Motor neuron (in vitro differentiated cells): ENCODE measurements at regions of chr11 and their contacts with region 1.

Region 1: GRCh38 chr11:33959855-33960400 is 68.1 kb upstream of the LMO2 start:
- ATAC-seq: no peak
- H3K4me3 ChIP-seq: no peak overlapping the region
- H3K27ac ChIP-seq: no peak overlapping the region
- H3K4me1 ChIP-seq: no peaks in the 10 kb centered on the region

Region 2: DNA sequence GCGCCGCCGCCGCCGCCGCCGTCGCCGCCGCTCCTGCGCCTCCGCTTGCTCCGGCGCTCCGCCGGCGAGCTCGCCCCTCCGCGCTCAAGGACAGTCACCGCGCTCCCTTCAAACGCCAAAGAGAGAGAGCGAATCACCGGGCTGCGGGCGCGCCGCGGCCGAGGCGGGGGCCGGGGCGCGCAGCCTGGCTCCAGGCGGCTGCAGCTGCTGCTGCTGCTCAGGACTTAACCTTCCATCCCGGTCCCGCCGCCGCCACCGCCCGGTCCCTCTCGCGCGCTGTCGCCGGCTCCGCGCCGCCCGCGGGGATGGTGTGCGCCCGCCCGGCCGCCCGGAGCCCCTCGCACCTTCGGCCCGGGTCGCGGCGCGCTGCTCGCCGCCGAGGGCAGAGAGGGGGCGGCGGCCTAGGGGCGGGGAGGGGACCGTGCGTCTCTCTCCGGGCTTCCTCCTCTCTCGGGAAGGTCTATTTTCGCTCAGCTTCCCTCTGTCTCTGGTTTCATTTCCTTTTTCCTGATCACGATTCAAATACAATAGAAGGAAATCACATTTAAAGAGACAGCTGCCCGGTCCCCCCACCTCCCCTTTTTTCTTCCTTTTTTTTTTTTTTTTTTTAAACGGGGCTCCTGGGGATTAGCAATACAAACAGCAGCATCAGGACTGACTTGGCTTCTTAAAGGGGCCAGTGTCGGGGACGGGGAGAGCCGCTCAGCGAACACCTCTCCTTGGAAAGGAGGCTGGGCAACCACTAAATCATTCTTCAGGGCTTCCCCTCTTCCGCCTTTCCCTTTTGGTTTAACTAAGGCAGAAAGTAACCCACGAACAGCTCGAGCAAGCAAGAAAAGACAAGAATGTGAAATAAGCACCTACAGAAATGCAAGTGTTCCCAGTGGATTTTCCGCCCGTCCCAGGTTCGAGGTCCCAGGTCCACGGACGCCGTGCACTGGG is 90.2 kb before region 1 on chr11:
- in situ Hi-C with region 1: loop called in 4 of 9 experiments (anchors 10 to 25 kb)
- ATAC-seq: peak; percentile 62 to 83 (median 78)
- H3K4me3 ChIP-seq: peak overlapping the region; percentile 46 to 68 (median 56)
- H3K27ac ChIP-seq: peak overlapping the region in 1 of 2 donors; percentile 16
- H3K4me1 ChIP-seq: peaks cover 2 to 5% of the 10 kb centered on the region in 2 donors

Region 3: GRCh38 chr11:34126959-34127848 is 167.3 kb after region 1 on chr11:
- in situ Hi-C with region 1: no loop called
- ATAC-seq: no peak
- H3K4me3 ChIP-seq: no peak overlapping the region
- H3K27ac ChIP-seq: no peak overlapping the region
- H3K4me1 ChIP-seq: no peaks in the 10 kb centered on the region